Activated CD4-positive, alpha-beta T cell treated with anti-CD3 and anti-CD28 coated beads for 36 hours (primary cell): ENCODE measurements at regions of chr2 and their contacts with region 1.

Region 1: GRCh38 chr2:135913727-135914365 is 37.6 kb upstream of the MCM6 start:
- DNase-seq: peak; percentile 53
- ATAC-seq: peak; percentile 58
- H3K4me3 Mint-ChIP-seq: no peak overlapping the region
- H3K27ac Mint-ChIP-seq: no peak overlapping the region
- H3K4me1 Mint-ChIP-seq: peaks cover 7% of the 10 kb centered on the region
- H3K27me3 Mint-ChIP-seq: no peaks in the 10 kb centered on the region

Region 2: DNA sequence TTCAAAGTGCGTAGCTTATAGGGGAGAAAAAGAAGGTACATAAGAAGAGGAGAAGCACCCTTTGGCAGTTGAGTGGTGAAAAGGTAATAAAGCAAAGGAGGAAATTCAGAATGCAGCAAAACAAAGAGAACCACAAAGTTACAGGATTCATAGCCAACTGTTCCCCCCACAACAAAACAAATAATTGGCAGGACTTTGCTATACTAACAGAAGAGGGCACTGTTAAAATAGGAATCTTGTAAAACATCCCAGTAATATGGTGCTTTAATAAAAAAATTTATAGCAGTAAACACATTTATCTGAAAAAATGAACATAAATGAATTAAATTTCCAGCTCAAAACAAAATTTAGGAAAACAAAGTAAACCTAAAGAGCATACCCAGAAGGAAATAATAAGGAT is 340.2 kb before region 1 on chr2:
- CTCF ChIA-PET with region 1: no interaction called
- POLR2A ChIA-PET with region 1: no interaction called
- intact Hi-C with region 1: no loop called
- DNase-seq: no peak
- ATAC-seq: no peak
- H3K4me3 Mint-ChIP-seq: no peak overlapping the region
- H3K27ac Mint-ChIP-seq: no peak overlapping the region
- H3K4me1 Mint-ChIP-seq: peaks cover 2% of the 10 kb centered on the region
- H3K27me3 Mint-ChIP-seq: no peaks in the 10 kb centered on the region

Region 3: GRCh38 chr2:135975702-135976101 is 61.9 kb after region 1 on chr2:
- CTCF ChIA-PET with region 1: interaction called, 10 read pairs
- POLR2A ChIA-PET with region 1: no interaction called
- intact Hi-C with region 1: no loop called
- DNase-seq: no peak
- ATAC-seq: no peak
- H3K4me3 Mint-ChIP-seq: no peak overlapping the region
- H3K27ac Mint-ChIP-seq: no peak overlapping the region
- H3K4me1 Mint-ChIP-seq: peaks cover 52% of the 10 kb centered on the region
- H3K27me3 Mint-ChIP-seq: no peaks in the 10 kb centered on the region

Region 4: GRCh38 chr2:136238286-136239078 is 324.6 kb after region 1 on chr2:
- CTCF ChIA-PET with region 1: interaction called, 3 read pairs
- POLR2A ChIA-PET with region 1: no interaction called
- intact Hi-C with region 1: loop called in 1 of 2 experiments (anchors 10 kb)
- DNase-seq: peak; percentile 44
- ATAC-seq: peak; percentile 82
- H3K4me3 Mint-ChIP-seq: peak overlapping the region; percentile 15
- H3K27ac Mint-ChIP-seq: peak overlapping the region; percentile 93
- H3K4me1 Mint-ChIP-seq: peaks cover 43% of the 10 kb centered on the region
- H3K27me3 Mint-ChIP-seq: no peaks in the 10 kb centered on the region

Region 5: DNA sequence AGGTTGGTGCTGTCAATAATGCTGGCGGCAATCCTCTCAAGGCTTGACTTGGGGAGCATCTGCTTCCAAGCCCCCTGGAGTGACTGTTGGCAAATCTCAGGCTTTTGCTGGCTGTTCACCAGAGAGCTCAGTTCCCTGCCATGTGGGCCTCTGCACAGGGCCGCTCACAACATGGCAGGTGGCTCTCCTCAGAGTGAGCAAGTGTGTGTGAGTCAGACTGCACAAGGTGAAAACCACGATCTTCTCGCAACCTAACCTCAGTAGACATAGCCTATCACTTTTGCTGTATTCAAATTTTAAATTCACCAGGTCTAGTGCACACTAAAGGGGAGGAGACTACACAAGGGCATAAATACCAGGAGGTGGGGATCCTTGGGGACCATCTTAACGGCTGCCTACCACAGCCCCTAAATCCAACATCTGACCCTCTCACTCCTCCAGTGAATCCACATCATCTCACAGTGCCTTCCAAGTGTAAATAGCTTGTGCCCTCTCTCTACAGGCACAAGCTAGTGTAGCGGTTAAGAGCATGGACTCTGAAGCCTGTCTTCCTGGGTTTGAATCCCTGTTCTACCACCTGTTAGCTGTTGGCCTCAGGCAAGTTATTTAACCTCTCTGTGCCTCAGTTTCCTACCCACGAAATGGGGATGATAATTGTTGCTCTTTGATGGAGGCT is 391.8 kb after region 1 on chr2:
- CTCF ChIA-PET with region 1: no interaction called
- POLR2A ChIA-PET with region 1: no interaction called
- intact Hi-C with region 1: loop called in 1 of 2 experiments (anchors 5 kb)
- DNase-seq: peak; percentile 84
- ATAC-seq: peak; percentile 99
- H3K4me3 Mint-ChIP-seq: no peak overlapping the region
- H3K27ac Mint-ChIP-seq: peak overlapping the region; percentile 88
- H3K4me1 Mint-ChIP-seq: peaks cover 33% of the 10 kb centered on the region
- H3K27me3 Mint-ChIP-seq: peaks cover 5% of the 10 kb centered on the region

Region 6: GRCh38 chr2:136378712-136379595 is 465.1 kb after region 1 on chr2:
- CTCF ChIA-PET with region 1: interaction called, 80 read pairs
- POLR2A ChIA-PET with region 1: interaction called, 3 read pairs
- intact Hi-C with region 1: loop called (anchors 1 kb)
- DNase-seq: peak; percentile 87
- ATAC-seq: peak; percentile 11
- H3K4me3 Mint-ChIP-seq: no peak overlapping the region
- H3K27ac Mint-ChIP-seq: no peak overlapping the region
- H3K4me1 Mint-ChIP-seq: peaks cover 82% of the 10 kb centered on the region
- H3K27me3 Mint-ChIP-seq: no peaks in the 10 kb centered on the region

Region 7: DNA sequence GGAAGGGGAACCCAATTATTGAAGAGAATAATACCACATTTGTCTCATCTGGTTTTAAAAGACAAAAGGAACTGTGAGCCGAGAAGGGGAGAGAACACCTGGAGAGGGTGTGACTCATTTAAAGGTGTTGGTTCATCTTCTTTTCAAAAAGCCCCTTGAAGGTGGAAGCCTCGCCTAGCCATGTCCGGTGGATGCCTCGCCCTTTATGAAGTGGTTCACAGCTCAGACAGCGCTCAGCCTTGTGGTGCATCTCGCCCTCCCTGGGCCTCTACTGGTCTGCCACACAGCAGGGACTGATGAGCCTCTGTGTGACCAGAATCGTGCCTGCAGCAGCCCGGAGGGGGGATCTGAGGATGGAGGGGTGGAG is 494.1 kb after region 1 on chr2:
- CTCF ChIA-PET with region 1: interaction called, 8 read pairs
- POLR2A ChIA-PET with region 1: interaction called, 17 read pairs
- intact Hi-C with region 1: no loop called
- DNase-seq: no peak
- ATAC-seq: no peak
- H3K4me3 Mint-ChIP-seq: no peak overlapping the region
- H3K27ac Mint-ChIP-seq: no peak overlapping the region
- H3K4me1 Mint-ChIP-seq: peaks cover 2% of the 10 kb centered on the region
- H3K27me3 Mint-ChIP-seq: peaks cover 28% of the 10 kb centered on the region

Region 8: GRCh38 chr2:136423516-136423996 is 509.7 kb after region 1 on chr2:
- CTCF ChIA-PET with region 1: interaction called, 10 read pairs
- POLR2A ChIA-PET with region 1: no interaction called
- intact Hi-C with region 1: loop called in 1 of 2 experiments (anchors 1 kb)
- DNase-seq: peak; percentile 93
- ATAC-seq: peak; percentile 98
- H3K4me3 Mint-ChIP-seq: peak overlapping the region; percentile 70
- H3K27ac Mint-ChIP-seq: peak overlapping the region; percentile 56
- H3K4me1 Mint-ChIP-seq: peaks cover 18% of the 10 kb centered on the region
- H3K27me3 Mint-ChIP-seq: peaks cover 43% of the 10 kb centered on the region